Sciatic nerve (tissue), 2 donors: ENCODE measurements at regions of chr14 and their contacts with region 1.

Region 1: GRCh38 chr14:57811998-57812546 is 53.8 kb downstream of the SLC35F4 start:
- DNase-seq: no peak
- ATAC-seq: no peak

Region 2: DNA sequence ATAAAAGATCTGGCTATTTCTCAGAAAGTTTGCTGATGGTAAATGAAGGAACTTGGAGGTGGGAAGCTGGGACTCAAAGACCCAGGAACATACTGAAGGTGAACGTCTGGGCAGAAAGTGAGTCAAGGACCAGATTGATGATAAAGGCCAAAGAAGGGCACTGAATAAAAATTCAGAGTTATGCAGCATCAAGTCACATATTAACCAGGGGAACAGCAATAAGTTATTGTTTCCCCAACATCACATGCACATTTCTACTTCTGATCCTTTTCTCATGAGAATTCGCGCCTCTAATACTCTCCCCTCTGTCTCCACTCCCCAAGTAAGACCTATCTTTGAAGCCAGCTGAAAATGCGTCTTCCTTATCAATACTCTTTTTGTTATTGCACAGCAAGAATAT is 125.6 kb after region 1 on chr14:
- intact Hi-C with region 1: loop called (anchors 5 kb)
- DNase-seq: no peak
- ATAC-seq: no peak